ENCODE measurements at regions of chr2 and their contacts with region 1.

Region 1: GRCh38 chr2:79271456-79271855 is 111.9 kb upstream of the REG3A start:
- DNase-seq: no peak
- ATAC-seq: no peak
- H3K4me3 ChIP-seq: no peak overlapping the region
- H3K27ac ChIP-seq: no peak overlapping the region
- H3K4me1 ChIP-seq: no peaks in the 10 kb centered on the region
- H3K27me3 ChIP-seq: no peaks in the 10 kb centered on the region
- CTCF ChIP-seq: no peak

Region 2: GRCh38 chr2:79292239-79292957 is 20.9 kb after region 1 on chr2:
- intact Hi-C with region 1: loop called in 1 of 10 experiments (anchors 2 kb)
- DNase-seq: no peak
- ATAC-seq: no peak
- H3K4me3 ChIP-seq: no peak overlapping the region
- H3K27ac ChIP-seq: no peak overlapping the region
- H3K4me1 ChIP-seq: no peaks in the 10 kb centered on the region
- H3K27me3 ChIP-seq: no peaks in the 10 kb centered on the region
- CTCF ChIP-seq: no peak